Sciatic nerve (tissue), 2 donors: ENCODE measurements at regions of chr13 and their contacts with region 1.

Region 1: DNA sequence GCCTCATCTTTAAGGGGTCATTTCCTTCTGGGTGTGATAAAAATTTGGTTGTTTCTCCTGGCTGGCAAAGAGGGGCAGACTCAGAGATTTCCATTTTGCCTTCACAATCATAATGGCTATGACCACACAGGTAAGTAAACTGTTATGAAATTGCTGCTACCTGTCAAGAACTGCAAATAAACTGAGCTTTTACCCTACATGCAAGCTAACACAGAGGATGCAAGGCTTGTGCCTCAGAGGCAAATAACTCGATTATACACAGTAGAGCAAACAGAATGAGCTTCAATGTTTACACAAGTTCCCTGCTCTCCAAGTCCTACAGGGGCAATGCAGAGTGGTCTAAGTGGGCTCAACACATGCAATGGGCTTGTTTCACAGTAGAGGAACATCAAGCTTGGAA is 2466.1 kb downstream of the PCDH9 start:
- DNase-seq: no peak
- ATAC-seq: no peak

Region 2: GRCh38 chr13:64130600-64130999 is 633.4 kb before region 1 on chr13:
- intact Hi-C with region 1: no loop called
- DNase-seq: no peak
- ATAC-seq: peak; percentile 84

Region 3: DNA sequence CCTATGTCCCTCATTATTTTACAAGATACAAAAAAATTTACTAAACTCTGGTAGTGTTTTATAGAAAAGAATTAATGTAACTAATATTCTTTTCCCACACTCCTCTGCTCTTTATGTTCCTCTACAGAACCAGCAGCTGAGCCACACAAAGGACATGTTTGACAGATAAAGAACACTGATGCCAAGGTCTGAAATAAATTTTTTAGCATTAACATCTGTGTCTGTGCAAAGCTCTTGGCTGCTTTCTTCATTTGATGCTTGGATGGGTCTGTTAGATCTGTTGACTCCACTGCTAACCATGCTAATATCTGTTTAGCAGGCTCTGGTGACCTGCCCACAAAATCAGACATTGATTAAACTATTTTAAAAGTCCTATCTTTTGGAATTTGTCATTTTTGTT is 102.3 kb after region 1 on chr13:
- intact Hi-C with region 1: no loop called
- DNase-seq: no peak
- ATAC-seq: no peak

Region 4: DNA sequence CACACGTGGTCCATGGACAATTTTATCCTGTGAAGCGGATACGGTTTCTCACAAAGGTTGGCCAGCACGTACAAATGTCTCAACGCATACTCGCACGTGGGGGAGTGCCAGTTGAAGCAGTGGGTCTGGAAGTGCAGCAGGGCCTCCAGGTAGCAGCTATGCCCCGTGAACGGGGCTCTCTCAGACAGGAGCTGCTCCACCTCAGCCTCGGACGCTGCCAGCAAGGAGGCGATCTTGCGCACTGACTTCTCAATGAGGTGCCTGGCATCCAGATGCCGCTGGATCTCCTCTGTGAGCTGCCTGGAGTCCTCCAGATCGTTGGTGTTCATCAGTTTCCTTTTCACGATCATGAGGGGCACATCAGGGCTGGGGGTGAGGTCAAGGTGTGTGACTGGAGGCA is 194.1 kb after region 1 on chr13:
- intact Hi-C with region 1: no loop called
- DNase-seq: no peak
- ATAC-seq: no peak

Region 5: DNA sequence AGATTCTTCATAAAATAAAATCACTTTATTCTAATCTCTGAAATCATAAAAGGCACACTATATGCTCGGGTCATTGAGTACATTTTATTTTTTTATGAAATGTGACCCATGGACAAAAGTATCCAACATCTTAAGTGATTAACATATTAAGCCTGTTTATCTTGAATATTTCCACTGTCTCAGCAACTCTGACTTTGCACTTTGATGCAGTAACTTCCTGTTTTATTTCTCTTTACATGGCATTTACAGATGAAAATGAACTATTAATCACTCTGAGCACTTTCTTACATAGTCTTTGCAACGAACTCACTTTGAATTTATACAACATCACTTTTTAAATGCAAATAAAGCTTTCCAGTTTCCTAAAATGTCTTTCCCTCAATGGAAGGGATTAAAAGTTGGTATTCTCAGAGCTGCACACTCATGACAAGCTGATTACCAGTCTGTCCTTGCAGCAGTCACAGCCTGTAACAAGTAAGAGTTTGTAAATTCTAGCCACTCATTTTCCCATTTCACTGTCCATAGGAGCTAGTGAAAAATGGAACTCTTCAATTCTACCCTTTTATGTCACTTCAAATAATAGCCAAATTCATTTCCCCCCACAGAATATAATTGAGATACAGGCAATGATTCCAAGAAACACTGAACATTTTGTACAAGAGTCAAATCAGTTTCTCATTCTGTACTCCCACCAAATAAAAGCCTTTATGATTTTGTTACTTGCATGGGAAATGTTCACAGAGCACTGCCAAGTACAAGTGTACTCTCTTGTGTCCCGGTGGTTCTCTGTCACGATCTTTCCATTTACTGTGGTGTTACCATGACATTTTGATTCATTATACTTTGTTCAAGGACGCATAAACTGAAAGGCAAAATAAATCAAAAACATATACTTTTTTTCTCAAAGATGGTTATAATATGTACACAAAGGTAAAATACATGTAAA is 497.2 kb after region 1 on chr13:
- intact Hi-C with region 1: loop called (anchors 10 kb)
- DNase-seq: no peak
- ATAC-seq: no peak